Caco-2 (cell line): ENCODE measurements at regions of chr3 and their contacts with region 1.

Region 1: DNA sequence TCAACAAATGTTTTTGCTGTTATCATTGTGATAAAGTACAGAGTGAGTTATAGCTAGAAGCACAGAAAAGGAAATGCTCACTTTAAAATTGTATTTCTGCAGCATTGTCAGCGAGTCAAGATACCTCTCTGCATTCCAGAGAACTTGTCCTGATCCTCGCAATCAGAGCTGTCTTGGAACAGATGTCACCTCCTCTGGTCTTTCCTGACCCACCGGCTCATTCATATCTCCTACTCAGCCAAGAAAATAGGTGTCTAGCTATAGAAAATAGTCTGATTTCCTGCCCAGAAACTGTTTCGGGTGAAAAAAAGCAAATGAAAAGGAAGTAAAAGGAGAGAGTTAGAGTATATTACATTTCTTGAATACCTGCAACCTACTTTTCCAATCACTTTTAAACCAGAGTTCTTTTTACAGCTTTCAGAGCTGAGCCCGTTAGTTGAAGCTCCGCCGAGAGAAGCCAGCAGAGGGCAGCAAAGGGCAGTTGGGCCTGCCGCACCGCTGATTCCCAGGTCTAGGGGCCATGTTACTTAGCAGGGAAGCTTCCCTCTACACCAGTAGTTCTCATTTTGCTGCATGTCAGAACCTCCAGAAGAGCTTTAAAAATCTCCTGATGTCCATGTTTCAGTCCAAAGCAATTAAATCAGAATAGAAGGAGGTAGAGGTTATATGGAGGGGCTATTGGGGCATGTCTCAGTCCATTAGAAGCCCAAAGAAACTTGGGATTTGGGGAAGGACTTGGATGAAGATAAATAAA is 185.7 kb upstream of the THRB start:
- DNase-seq: peak; percentile 48 to 75
- H3K4me3 ChIP-seq: no peak overlapping the region
- H3K4me3 Mint-ChIP-seq: no peak overlapping the region
- H3K27ac Mint-ChIP-seq: no peak overlapping the region
- H3K4me1 ChIP-seq: no peaks in the 10 kb centered on the region
- H3K4me1 Mint-ChIP-seq: no peaks in the 10 kb centered on the region
- H3K27me3 ChIP-seq: no peaks in the 10 kb centered on the region
- H3K27me3 Mint-ChIP-seq: no peaks in the 10 kb centered on the region
- CTCF ChIP-seq: peak; percentile 70 to 83

Region 2: DNA sequence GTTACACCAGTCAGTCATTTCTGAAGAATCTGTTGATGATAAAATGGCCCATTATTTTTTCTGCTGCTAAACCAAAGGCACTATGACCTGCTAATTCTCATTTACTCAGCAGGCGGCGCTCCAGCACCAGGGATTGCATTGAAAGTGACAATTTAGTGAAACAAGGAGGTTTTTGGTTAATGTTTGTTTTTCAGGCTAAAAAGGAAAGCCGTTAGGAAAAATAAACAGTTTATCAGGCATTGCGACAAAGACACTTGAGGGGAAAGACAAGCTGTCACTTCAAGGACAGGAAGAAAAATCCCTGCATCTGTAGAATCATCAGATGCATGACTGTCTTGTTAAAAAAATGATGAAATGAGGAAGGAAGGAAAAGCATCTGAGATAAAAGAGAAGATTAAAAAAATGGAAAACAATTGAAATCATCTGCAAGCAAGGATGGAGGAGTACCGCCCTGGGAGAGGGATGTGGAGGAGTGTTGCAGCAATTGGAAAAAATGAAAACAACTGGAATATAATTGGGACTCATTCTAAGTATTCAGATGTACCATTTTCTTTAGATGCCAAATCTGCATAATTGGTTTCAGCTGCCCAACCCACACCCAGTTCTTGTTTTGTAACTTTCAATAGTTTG is 681.3 kb before region 1 on chr3:
- CTCF ChIA-PET with region 1: interaction called, 3 read pairs
- POLR2A ChIA-PET with region 1: no interaction called
- intact Hi-C with region 1: loop called (anchors 1 kb)
- DNase-seq: peak; percentile 60 to 77
- H3K4me3 ChIP-seq: no peak overlapping the region
- H3K4me3 Mint-ChIP-seq: no peak overlapping the region
- H3K27ac Mint-ChIP-seq: no peak overlapping the region
- H3K4me1 ChIP-seq: no peaks in the 10 kb centered on the region
- H3K4me1 Mint-ChIP-seq: peaks cover 5% of the 10 kb centered on the region
- H3K27me3 ChIP-seq: no peaks in the 10 kb centered on the region
- H3K27me3 Mint-ChIP-seq: no peaks in the 10 kb centered on the region
- CTCF ChIP-seq: peak; percentile 83 to 90

Region 3: DNA sequence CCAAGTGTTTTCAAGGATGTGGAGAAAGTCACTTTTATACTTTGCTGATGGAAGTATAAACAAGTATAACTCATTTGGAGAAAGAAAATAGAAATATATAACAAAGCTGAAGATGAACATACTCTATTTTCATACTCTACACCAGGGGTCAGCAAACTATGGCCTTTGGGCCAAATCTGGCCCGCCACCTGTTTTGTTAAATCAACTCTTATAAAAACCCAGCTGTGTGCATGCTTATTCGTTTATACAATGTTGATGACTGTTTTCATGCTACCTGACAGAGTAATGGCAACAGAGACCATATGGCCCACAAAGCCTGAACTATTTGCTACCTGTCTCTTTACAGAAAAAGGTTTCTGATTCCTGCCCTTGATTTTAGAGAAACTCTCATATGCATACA is 611.3 kb before region 1 on chr3:
- CTCF ChIA-PET with region 1: interaction called, 4 read pairs
- POLR2A ChIA-PET with region 1: no interaction called
- intact Hi-C with region 1: loop called (anchors 2 kb)
- DNase-seq: peak in 1 of 2 experiments; percentile 38
- H3K4me3 ChIP-seq: no peak overlapping the region
- H3K4me3 Mint-ChIP-seq: no peak overlapping the region
- H3K27ac Mint-ChIP-seq: no peak overlapping the region
- H3K4me1 ChIP-seq: no peaks in the 10 kb centered on the region
- H3K4me1 Mint-ChIP-seq: no peaks in the 10 kb centered on the region
- H3K27me3 ChIP-seq: no peaks in the 10 kb centered on the region
- H3K27me3 Mint-ChIP-seq: no peaks in the 10 kb centered on the region
- CTCF ChIP-seq: peak; percentile 38 to 51

Region 4: DNA sequence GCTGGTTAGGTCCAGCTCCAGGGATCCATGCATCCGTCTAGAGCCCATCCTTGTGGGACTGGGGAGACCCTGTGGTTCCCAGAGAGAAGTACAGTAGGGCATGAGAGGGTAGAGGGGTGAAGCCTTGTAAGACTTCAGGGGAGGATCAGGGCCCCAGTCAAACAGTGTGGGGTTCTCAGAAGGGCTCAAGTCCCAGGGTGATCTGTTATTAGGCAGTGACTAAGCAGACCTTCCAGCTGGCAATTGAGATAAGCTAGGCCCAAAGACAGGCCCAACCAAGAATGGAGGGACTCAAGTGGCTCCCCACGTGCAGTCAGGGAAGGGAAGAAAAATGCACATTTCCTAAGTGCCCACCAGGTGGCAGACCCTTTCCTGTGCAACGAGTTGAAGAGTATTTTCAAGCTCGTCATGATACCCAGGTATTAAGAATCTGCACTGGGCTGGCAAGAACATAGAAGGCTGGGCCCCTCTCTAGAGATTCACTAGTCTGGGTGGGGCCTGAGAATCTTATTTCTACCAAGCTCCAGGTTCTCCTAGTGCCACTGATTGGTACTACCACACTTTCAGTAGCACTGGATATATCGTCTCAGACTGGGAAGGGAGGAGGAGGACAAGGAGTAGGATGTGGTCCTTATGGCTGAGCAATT is 494.5 kb before region 1 on chr3:
- CTCF ChIA-PET with region 1: no interaction called
- POLR2A ChIA-PET with region 1: no interaction called
- intact Hi-C with region 1: loop called (anchors 1 kb)
- DNase-seq: peak; percentile 37 to 48
- H3K4me3 ChIP-seq: no peak overlapping the region
- H3K4me3 Mint-ChIP-seq: no peak overlapping the region
- H3K27ac Mint-ChIP-seq: no peak overlapping the region
- H3K4me1 ChIP-seq: peaks cover 16% of the 10 kb centered on the region; the same call in 1 of the 2 replicates
- H3K4me1 Mint-ChIP-seq: peaks cover 7% of the 10 kb centered on the region
- H3K27me3 ChIP-seq: no peaks in the 10 kb centered on the region
- H3K27me3 Mint-ChIP-seq: no peaks in the 10 kb centered on the region
- CTCF ChIP-seq: peak; percentile 48 to 67

Region 5: GRCh38 chr3:24237971-24238767 is 442.2 kb before region 1 on chr3:
- CTCF ChIA-PET with region 1: no interaction called
- POLR2A ChIA-PET with region 1: no interaction called
- intact Hi-C with region 1: loop called (anchors 10 kb)
- DNase-seq: peak; percentile 53 to 74
- H3K4me3 ChIP-seq: no peak overlapping the region
- H3K4me3 Mint-ChIP-seq: no peak overlapping the region
- H3K27ac Mint-ChIP-seq: no peak overlapping the region
- H3K4me1 ChIP-seq: no peaks in the 10 kb centered on the region
- H3K4me1 Mint-ChIP-seq: no peaks in the 10 kb centered on the region
- H3K27me3 ChIP-seq: no peaks in the 10 kb centered on the region
- H3K27me3 Mint-ChIP-seq: no peaks in the 10 kb centered on the region
- CTCF ChIP-seq: peak; percentile 57 to 75

Region 6: GRCh38 chr3:24264748-24265158 is 415.6 kb before region 1 on chr3:
- CTCF ChIA-PET with region 1: no interaction called
- POLR2A ChIA-PET with region 1: no interaction called
- intact Hi-C with region 1: loop called (anchors 2 kb)
- DNase-seq: peak in 1 of 2 experiments; percentile 53
- H3K4me3 ChIP-seq: no peak overlapping the region
- H3K4me3 Mint-ChIP-seq: no peak overlapping the region
- H3K27ac Mint-ChIP-seq: no peak overlapping the region
- H3K4me1 ChIP-seq: no peaks in the 10 kb centered on the region
- H3K4me1 Mint-ChIP-seq: peaks cover 6% of the 10 kb centered on the region
- H3K27me3 ChIP-seq: no peaks in the 10 kb centered on the region
- H3K27me3 Mint-ChIP-seq: no peaks in the 10 kb centered on the region
- CTCF ChIP-seq: peak; percentile 67 to 76

Region 7: DNA sequence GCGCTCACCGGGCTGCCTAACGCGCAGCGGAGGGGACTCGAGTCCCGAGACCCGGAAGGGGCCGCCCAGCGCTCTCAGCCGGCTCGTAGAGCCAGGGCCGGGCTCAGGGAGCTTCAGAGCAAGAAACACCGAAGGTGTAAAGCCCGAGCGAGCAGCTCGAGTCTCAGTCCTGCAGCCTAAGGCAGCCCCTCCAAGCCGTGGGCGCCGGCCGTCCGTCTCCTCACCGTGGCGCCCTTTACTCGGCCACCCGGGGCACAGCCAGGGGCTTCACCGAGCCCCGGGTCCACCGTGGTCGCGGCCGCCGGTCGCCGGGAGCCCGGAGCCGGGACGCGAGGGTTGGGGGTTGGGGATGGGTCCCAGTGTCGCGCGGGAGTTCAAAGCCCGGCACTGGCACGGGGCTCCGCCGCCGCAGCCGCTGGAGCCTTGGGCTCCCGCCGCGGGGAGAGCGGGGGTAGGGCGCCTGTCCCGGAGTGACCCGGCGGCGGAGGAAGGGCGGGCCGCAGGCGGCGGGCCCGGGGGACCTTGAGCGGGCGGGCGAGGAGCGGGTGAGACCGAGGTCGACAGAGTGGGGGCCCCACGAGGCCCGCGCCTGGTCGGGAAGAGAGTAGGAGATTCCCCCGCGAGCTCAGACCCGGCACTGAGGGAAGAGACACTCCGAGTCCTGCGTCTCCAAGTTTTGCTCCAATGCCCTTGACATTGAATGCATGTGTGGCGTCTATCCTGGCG is 158.8 kb before region 1 on chr3:
- CTCF ChIA-PET with region 1: interaction called, 3 read pairs
- POLR2A ChIA-PET with region 1: no interaction called
- intact Hi-C with region 1: loop called (anchors 5 kb)
- DNase-seq: peak; percentile 63 to 67
- H3K4me3 ChIP-seq: peak overlapping the region; percentile 51
- H3K4me3 Mint-ChIP-seq: peak overlapping the region; percentile 79
- H3K27ac Mint-ChIP-seq: no peak overlapping the region
- H3K4me1 ChIP-seq: peaks cover 41% of the 10 kb centered on the region
- H3K4me1 Mint-ChIP-seq: peaks cover 33% of the 10 kb centered on the region
- H3K27me3 ChIP-seq: no peaks in the 10 kb centered on the region
- H3K27me3 Mint-ChIP-seq: no peaks in the 10 kb centered on the region
- CTCF ChIP-seq: peak in 1 of 2 experiments; percentile 1